Activated CD8-positive, alpha-beta T cell treated with anti-CD3 and anti-CD28 coated beads for 36 hours (primary cell): ENCODE measurements at regions of chr1 and their contacts with region 1.

Region 1: GRCh38 chr1:175208773-175209492 is 16.4 kb upstream of the KIAA0040 start:
- DNase-seq: peak; percentile 70
- ATAC-seq: peak; percentile 82
- H3K4me3 Mint-ChIP-seq: peak overlapping the region; percentile 65
- H3K27ac Mint-ChIP-seq: peak overlapping the region; percentile 96
- H3K4me1 Mint-ChIP-seq: peaks cover 53% of the 10 kb centered on the region
- H3K27me3 Mint-ChIP-seq: no peaks in the 10 kb centered on the region
- CTCF ChIP-seq: no peak

Region 2: DNA sequence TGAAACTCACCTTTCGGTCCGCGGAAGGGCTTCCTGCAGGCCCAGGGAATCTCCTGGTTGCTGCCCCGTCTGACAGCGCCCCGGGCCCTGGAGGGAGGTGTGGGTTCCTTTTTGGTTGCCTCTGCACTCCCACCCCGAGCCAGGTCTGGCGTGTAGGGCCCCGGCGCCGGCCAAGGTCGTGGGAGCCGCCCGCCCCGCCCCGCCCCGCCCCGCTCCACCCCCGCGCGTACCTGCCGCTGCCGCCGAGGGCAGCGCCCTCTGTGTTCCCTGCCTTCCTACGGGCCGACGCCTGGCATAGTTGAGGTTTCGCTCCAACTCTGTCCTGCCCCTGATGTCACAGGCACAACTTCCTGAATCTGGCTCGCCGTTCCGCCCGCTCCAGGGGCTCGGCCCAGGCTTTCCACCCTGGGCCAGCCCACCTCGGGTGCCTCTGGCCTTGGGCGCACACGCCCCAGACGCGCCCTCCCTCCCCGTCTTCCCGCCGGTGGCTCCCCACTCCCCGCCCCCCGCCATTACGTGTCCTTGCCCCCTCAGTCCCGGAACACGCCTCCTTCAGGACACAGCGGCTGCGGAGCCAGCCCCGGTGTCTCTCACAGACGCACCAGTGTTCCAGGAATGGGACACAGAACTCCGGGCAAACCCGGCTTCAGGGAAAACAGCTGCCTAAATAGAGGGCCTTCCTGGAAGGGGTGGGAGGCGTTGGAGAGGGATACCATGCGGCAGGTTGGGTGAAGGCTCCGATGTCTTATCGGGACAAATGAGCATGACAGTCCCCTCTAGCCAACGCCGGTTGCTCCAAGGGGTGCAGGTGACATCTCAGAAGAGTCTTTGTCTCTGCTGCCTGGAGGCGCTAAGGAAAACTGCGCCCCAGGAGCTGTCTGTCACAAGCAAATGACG is 16.1 kb before region 1 on chr1 and contains the start of gene KIAA0040:
- CTCF ChIA-PET with region 1: interaction called, 35 read pairs
- POLR2A ChIA-PET with region 1: interaction called, 12 read pairs
- intact Hi-C with region 1: loop called (anchors 2 kb)
- DNase-seq: peak; percentile 66
- ATAC-seq: peak; percentile 64
- H3K4me3 Mint-ChIP-seq: peak within 1 kb of the TSS; percentile 96
- H3K27ac Mint-ChIP-seq: peak within 1 kb of the TSS; percentile 92
- H3K4me1 Mint-ChIP-seq: peaks cover 46% of the 10 kb centered on the region
- H3K27me3 Mint-ChIP-seq: no peaks in the 10 kb centered on the region
- CTCF ChIP-seq: no peak
- total RNA-seq, gene KIAA0040: 20.8 to 21.1 TPM